Activated naive CD4-positive, alpha-beta T cell treated with anti-CD3 and anti-CD28 coated beads for 36 hours (primary cell): ENCODE measurements at regions of chr3 and their contacts with region 1.

Region 1: DNA sequence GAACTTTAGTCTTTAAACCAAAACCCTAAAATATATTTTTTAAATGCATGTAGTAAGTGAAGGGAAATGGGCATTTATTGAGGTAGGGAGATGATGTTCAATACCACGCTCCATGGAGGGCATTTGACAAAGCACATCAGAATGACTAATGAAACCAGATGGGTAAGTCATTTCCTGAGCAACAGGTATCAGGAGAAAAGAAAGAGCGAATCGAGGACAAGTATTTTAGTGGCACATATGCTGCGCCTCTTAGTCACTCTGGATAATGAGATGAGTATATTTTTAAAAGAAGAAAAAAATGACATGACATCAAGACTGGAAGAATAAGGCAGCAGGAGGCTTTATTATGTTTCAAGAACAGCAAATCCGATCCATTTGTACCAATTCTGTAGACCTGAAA is 129.0 kb upstream of the ARHGEF3 start:
- DNase-seq: peak; percentile 60
- H3K4me3 Mint-ChIP-seq: no peak overlapping the region
- H3K27ac Mint-ChIP-seq: peak overlapping the region; percentile 81
- H3K4me1 Mint-ChIP-seq: peaks cover 65% of the 10 kb centered on the region
- H3K27me3 Mint-ChIP-seq: no peaks in the 10 kb centered on the region

Region 2: DNA sequence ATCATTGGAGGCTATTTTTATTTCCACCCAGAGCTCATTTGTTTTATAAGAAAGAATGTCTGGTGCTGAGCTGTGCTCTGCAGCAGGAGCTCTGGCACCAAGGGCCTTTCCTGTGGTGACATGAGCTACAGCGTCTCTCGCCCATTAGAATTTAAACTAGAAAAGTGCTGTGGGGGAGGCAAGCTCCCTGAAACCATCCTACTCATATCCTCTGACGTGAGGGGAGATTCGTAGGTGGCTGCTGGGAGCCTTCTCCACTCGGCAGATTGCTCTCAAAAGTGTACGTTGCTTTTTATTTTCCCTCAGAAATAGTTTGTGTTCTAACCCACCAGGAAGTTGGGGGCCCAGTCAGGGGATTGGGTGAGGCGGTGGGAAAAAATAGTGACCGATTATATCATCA is 52.6 kb before region 1 on chr3:
- CTCF ChIA-PET with region 1: no interaction called
- intact Hi-C with region 1: loop called (anchors 2 kb)
- DNase-seq: peak; percentile 84
- H3K4me3 Mint-ChIP-seq: peak overlapping the region; percentile 52
- H3K27ac Mint-ChIP-seq: peak overlapping the region; percentile 94
- H3K4me1 Mint-ChIP-seq: peaks cover 90% of the 10 kb centered on the region
- H3K27me3 Mint-ChIP-seq: no peaks in the 10 kb centered on the region

Region 3: GRCh38 chr3:56887402-56888025 is 43.2 kb before region 1 on chr3:
- CTCF ChIA-PET with region 1: interaction called, 4 read pairs
- intact Hi-C with region 1: loop called (anchors 2 kb)
- DNase-seq: peak; percentile 70
- H3K4me3 Mint-ChIP-seq: peak overlapping the region; percentile 25
- H3K27ac Mint-ChIP-seq: peak overlapping the region; percentile 7
- H3K4me1 Mint-ChIP-seq: peaks cover 85% of the 10 kb centered on the region
- H3K27me3 Mint-ChIP-seq: no peaks in the 10 kb centered on the region

Region 4: GRCh38 chr3:56942523-56942922 is 11.8 kb after region 1 on chr3:
- CTCF ChIA-PET with region 1: interaction called, 3 read pairs
- intact Hi-C with region 1: loop called (anchors 1 kb)
- DNase-seq: peak; percentile 30
- H3K4me3 Mint-ChIP-seq: no peak overlapping the region
- H3K27ac Mint-ChIP-seq: no peak overlapping the region
- H3K4me1 Mint-ChIP-seq: peaks cover 23% of the 10 kb centered on the region
- H3K27me3 Mint-ChIP-seq: peaks cover 2% of the 10 kb centered on the region

Region 5: GRCh38 chr3:56980798-56981390 is 50.2 kb after region 1 on chr3:
- CTCF ChIA-PET with region 1: no interaction called
- intact Hi-C with region 1: loop called (anchors 1 kb)
- DNase-seq: peak; percentile 82
- H3K4me3 Mint-ChIP-seq: no peak overlapping the region
- H3K27ac Mint-ChIP-seq: peak overlapping the region; percentile 65
- H3K4me1 Mint-ChIP-seq: peaks cover 25% of the 10 kb centered on the region
- H3K27me3 Mint-ChIP-seq: no peaks in the 10 kb centered on the region